GM10248 (cell line): ENCODE measurements at regions of chr11 and their contacts with region 1.

Region 1: DNA sequence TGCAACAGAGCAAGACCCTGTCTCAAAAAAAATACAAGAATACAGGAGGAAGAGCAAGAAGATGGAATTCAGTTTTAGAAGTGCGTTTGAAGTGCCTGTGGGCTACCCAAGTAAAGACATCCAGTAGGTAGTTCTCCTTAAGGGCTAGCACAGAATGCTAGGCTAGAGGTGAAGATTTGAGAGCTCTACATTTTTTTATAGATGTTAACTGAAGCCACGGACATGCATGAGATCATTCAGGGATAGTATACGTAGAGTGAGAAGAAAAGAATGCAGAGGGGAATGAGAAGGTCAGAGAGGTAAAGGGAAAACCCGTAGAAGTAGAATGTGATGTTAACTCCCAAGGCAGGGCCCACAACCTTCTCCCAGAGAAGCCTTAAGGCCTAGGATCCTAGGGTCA is 6.8 kb downstream of the FOXR1 start:
- DNase-seq: no peak
- CTCF ChIP-seq: no peak

Region 2: GRCh38 chr11:118497831-118498230 is 480.5 kb before region 1 on chr11:
- CTCF ChIA-PET with region 1: no interaction called
- POLR2A ChIA-PET with region 1: no interaction called
- DNase-seq: no peak
- CTCF ChIP-seq: no peak

Region 3: GRCh38 chr11:118878163-118878563 is 100.2 kb before region 1 on chr11:
- CTCF ChIA-PET with region 1: no interaction called
- POLR2A ChIA-PET with region 1: interaction called, 12 read pairs
- DNase-seq: no peak
- CTCF ChIP-seq: no peak

Region 4: GRCh38 chr11:119081682-119082260 is 103.4 kb after region 1 on chr11:
- CTCF ChIA-PET with region 1: no interaction called
- POLR2A ChIA-PET with region 1: no interaction called
- DNase-seq: no peak
- CTCF ChIP-seq: no peak

Region 5: GRCh38 chr11:119144825-119145486 is 166.6 kb after region 1 on chr11:
- CTCF ChIA-PET with region 1: no interaction called
- POLR2A ChIA-PET with region 1: no interaction called
- DNase-seq: peak; percentile 82
- CTCF ChIP-seq: peak; percentile 61